ENCODE measurements at regions of chr14 and their contacts with region 1.

Region 1: GRCh38 chr14:99271951-99272631 is at the start of gene BCL11B:
- DNase-seq: peak; percentile 63 to 94 (median 91)
- ATAC-seq: peak; percentile 89
- H3K4me3 ChIP-seq: peak within 1 kb of the TSS; percentile 94
- H3K4me3 Mint-ChIP-seq: peak within 1 kb of the TSS; percentile 92 to 100 (median 98)
- H3K27ac ChIP-seq: peak within 1 kb of the TSS; percentile 98
- H3K27ac Mint-ChIP-seq: peak within 1 kb of the TSS; percentile 91 to 99 (median 98)
- H3K4me1 ChIP-seq: peaks cover 6 to 12% of the 10 kb centered on the region in 2 donors
- H3K4me1 Mint-ChIP-seq: peaks cover 25 to 46% (median 34%) of the 10 kb centered on the region in 7 donors
- H3K27me3 ChIP-seq: no peaks in the 10 kb centered on the region
- H3K27me3 Mint-ChIP-seq: peaks cover 0 to 26% (median 0%) of the 10 kb centered on the region in 5 donors
- total RNA-seq, gene BCL11B: 96.3 to 269 (median 223) TPM

Region 2: DNA sequence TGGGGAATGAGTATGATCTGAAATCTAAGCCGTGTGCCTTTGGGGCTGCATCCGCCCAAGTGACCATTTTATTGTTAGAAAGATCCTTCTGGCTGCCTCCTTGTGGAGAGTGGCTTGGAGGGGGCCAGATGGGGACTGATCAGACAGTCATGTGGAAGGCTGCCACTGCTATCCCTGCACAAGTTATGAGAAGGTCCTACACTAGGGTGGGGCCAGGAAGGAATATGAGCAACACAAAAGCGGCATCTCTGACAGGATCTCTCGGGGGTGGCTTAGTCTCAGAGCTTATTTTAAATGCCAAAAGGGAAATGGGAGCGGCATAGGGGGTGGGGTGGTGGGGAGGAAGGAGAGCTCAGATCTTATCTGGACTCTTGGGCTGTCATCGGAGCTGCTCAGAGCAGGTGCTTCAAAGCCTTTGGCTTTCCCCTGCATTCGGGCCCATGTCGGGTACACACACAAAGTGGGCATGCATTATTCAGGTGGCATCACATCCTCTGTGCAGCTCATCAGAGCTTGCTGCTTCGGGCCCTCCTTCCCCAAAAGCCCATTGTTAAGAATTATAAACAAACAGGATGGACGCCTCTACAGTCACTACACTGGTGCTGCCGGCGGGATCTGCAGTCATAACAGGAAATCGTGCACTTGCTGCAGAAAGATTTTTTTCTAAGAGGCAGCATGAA is 1669.5 kb before region 1 on chr14:
- CTCF ChIA-PET with region 1: interaction called, 5 read pairs
- POLR2A ChIA-PET with region 1: interaction called, 22 read pairs
- intact Hi-C with region 1: loop called (anchors 1 to 5 kb)
- DNase-seq: peak; percentile 39 to 92 (median 89)
- ATAC-seq: peak; percentile 94
- H3K4me3 ChIP-seq: peak overlapping the region; percentile 37
- H3K4me3 Mint-ChIP-seq: no peak overlapping the region
- H3K27ac ChIP-seq: peak overlapping the region; percentile 80
- H3K27ac Mint-ChIP-seq: no peak overlapping the region
- H3K4me1 ChIP-seq: peaks cover 57 to 64% of the 10 kb centered on the region in 2 donors
- H3K4me1 Mint-ChIP-seq: peaks cover 0 to 31% (median 4%) of the 10 kb centered on the region in 7 donors
- H3K27me3 ChIP-seq: no peaks in the 10 kb centered on the region
- H3K27me3 Mint-ChIP-seq: no peaks in the 10 kb centered on the region

Region 3: DNA sequence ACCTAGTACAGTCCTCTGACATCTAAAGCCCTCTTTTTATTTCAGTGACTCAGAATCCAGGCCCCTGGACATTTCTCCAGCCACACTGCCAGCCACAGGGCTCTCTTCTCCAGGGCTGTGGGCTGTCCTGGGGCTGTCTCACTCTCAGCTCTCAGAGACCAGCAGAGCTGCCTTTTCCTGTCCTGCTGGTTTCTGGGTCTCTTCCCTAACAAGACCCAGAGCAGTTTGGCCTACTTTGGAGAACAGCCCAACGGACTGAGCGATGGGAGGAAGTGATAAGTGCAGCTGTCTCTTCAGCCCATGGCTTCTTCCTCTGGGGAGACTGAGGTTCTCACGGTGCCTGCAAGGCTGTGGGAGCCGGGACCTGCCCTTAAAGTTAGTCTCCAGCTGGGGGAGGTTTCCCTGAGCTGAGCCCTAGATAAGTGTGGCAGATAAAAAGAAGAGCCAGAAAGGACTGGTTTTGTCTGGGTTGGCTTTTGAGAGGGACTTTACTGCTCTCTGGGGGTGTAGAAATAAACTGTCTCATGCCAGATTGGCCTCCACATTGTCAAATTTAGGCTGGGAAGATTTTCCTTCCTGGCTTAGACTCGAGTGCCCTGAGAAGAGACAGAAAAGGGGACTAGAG is 1495.0 kb before region 1 on chr14:
- CTCF ChIA-PET with region 1: no interaction called
- POLR2A ChIA-PET with region 1: interaction called, 3 read pairs
- intact Hi-C with region 1: loop called in 1 of 2 experiments (anchors 1 kb)
- DNase-seq: peak in 4 of 9 donors; percentile 3 to 27 (median 21)
- ATAC-seq: peak; percentile 46
- H3K4me3 ChIP-seq: no peak overlapping the region
- H3K4me3 Mint-ChIP-seq: peak overlapping the region in 6 of 10 donors; percentile 37 to 76 (median 46)
- H3K27ac ChIP-seq: no peak overlapping the region
- H3K27ac Mint-ChIP-seq: peak overlapping the region in 6 of 9 donors; percentile 32 to 86 (median 53)
- H3K4me1 ChIP-seq: peaks cover 0 to 14% of the 10 kb centered on the region in 2 donors
- H3K4me1 Mint-ChIP-seq: peaks cover 9 to 35% (median 28%) of the 10 kb centered on the region in 7 donors
- H3K27me3 ChIP-seq: no peaks in the 10 kb centered on the region
- H3K27me3 Mint-ChIP-seq: no peaks in the 10 kb centered on the region

Region 4: GRCh38 chr14:98167705-98168104 is 1104.4 kb before region 1 on chr14:
- CTCF ChIA-PET with region 1: no interaction called
- POLR2A ChIA-PET with region 1: interaction called, 12 read pairs
- intact Hi-C with region 1: no loop called
- DNase-seq: peak in 3 of 9 donors; percentile 34 to 45 (median 39)
- ATAC-seq: peak; percentile 27
- H3K4me3 ChIP-seq: peak overlapping the region; percentile 39
- H3K4me3 Mint-ChIP-seq: peak overlapping the region; percentile 49 to 84 (median 73)
- H3K27ac ChIP-seq: peak overlapping the region; percentile 81
- H3K27ac Mint-ChIP-seq: peak overlapping the region; percentile 83 to 100 (median 97)
- H3K4me1 ChIP-seq: peaks cover 55 to 88% of the 10 kb centered on the region in 2 donors
- H3K4me1 Mint-ChIP-seq: peaks cover 48 to 100% (median 96%) of the 10 kb centered on the region in 7 donors
- H3K27me3 ChIP-seq: no peaks in the 10 kb centered on the region
- H3K27me3 Mint-ChIP-seq: no peaks in the 10 kb centered on the region

Region 5: GRCh38 chr14:98227000-98227726 is 1044.9 kb before region 1 on chr14:
- CTCF ChIA-PET with region 1: interaction called, 7 read pairs
- POLR2A ChIA-PET with region 1: interaction called, 17 read pairs
- intact Hi-C with region 1: loop called in 1 of 2 experiments (anchors 1 kb)
- DNase-seq: peak in 4 of 9 donors; percentile 33 to 57 (median 38)
- ATAC-seq: no peak
- H3K4me3 ChIP-seq: peak overlapping the region; percentile 28
- H3K4me3 Mint-ChIP-seq: peak overlapping the region; percentile 51 to 85 (median 68)
- H3K27ac ChIP-seq: peak overlapping the region; percentile 83
- H3K27ac Mint-ChIP-seq: peak overlapping the region; percentile 92 to 100 (median 96)
- H3K4me1 ChIP-seq: peaks cover 35 to 90% of the 10 kb centered on the region in 2 donors
- H3K4me1 Mint-ChIP-seq: peaks cover 48 to 96% (median 91%) of the 10 kb centered on the region in 7 donors
- H3K27me3 ChIP-seq: no peaks in the 10 kb centered on the region
- H3K27me3 Mint-ChIP-seq: no peaks in the 10 kb centered on the region

Region 6: GRCh38 chr14:99192028-99192621 is 80.0 kb before region 1 on chr14:
- CTCF ChIA-PET with region 1: interaction called, 9 read pairs
- POLR2A ChIA-PET with region 1: interaction called, 396 read pairs
- intact Hi-C with region 1: no loop called
- DNase-seq: peak in 3 of 9 donors; percentile 45 to 64 (median 49)
- ATAC-seq: peak; percentile 28
- H3K4me3 ChIP-seq: peak overlapping the region; percentile 61
- H3K4me3 Mint-ChIP-seq: peak overlapping the region; percentile 85 to 94 (median 90)
- H3K27ac ChIP-seq: peak overlapping the region; percentile 85
- H3K27ac Mint-ChIP-seq: peak overlapping the region; percentile 93 to 100 (median 98)
- H3K4me1 ChIP-seq: peaks cover 84 to 85% of the 10 kb centered on the region in 2 donors
- H3K4me1 Mint-ChIP-seq: peaks cover 55 to 97% (median 93%) of the 10 kb centered on the region in 7 donors
- H3K27me3 ChIP-seq: no peaks in the 10 kb centered on the region
- H3K27me3 Mint-ChIP-seq: no peaks in the 10 kb centered on the region